PC-3 (cell line): ENCODE measurements at regions of chr15 and their contacts with region 1.

Region 1: DNA sequence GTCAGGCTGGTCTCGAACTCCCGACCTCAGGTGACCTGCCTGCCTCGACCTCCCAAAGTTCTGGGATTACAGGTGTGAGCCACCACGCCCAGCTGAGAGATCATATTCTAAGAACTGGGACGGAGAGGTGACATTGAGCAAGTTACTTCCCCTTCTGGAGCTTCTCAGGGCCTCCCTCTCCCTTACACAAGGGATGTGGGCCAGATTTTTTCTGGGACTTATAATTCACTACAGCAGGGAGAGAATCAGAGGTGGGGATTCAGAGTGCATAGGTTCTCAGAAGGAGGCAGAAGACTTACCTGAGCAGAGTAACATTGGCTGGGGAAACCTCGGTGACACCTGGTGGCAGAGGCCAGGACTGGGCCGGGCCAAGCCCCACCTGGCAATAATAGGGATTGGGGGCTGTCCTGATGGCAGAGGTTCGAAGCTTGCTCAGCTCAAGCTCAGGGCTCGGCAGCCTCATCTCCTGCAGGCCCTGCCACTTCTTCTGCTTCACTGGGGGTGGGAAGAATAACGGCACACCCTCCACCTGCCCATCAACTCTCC is 6.8 kb downstream of the LTK start:
- DNase-seq: peak; percentile 30
- ATAC-seq: peak; percentile 49
- H3K4me3 ChIP-seq: no peak overlapping the region
- H3K27ac ChIP-seq: no peak overlapping the region
- H3K4me1 ChIP-seq: peaks cover 13% of the 10 kb centered on the region
- H3K27me3 ChIP-seq: no peaks in the 10 kb centered on the region
- CTCF ChIP-seq: peak; percentile 52; the same call in 1 of the 2 replicates

Region 2: GRCh38 chr15:41401904-41402267 is 105.0 kb before region 1 on chr15:
- CTCF ChIA-PET with region 1: no interaction called
- POLR2A ChIA-PET with region 1: interaction called, 19 read pairs
- intact Hi-C with region 1: no loop called
- DNase-seq: no peak
- ATAC-seq: no peak
- H3K4me3 ChIP-seq: peak overlapping the region; percentile 84
- H3K27ac ChIP-seq: peak overlapping the region; percentile 27
- H3K4me1 ChIP-seq: 0 out of 2 replicates have a peak, but pooled peaks cover 4% of the 10 kb centered on the region
- H3K27me3 ChIP-seq: no peaks in the 10 kb centered on the region
- CTCF ChIP-seq: no peak

Region 3: DNA sequence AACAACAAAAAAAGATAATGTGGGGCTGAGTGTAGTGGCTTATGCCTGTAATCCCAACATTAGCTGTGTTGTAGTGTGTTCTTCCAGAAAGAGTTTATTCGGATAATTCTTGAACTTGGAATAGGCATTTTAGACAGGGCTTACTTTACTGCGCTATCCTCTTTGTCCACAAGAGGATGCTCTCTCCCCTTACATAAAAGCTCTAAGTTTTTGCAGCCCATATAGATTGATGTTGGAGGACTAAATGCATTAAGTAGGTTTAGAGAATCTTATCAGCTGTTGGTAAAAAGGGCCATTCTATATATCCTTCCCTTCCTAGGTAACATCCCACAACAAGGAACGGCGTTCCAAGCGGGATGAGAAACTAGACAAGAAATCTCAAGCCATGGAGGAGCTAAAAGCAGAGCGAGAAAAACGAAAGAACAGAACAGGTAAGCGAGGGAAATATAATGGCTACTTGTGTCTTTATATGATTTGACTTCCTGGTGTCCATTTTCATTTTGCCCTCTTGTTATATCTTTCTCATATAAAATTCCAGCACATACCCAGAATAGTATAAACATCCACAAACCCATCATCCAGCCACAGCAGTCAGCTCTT is 40.9 kb before region 1 on chr15:
- CTCF ChIA-PET with region 1: interaction called, 3 read pairs
- POLR2A ChIA-PET with region 1: no interaction called
- intact Hi-C with region 1: loop called (anchors 5 kb)
- DNase-seq: peak; percentile 73
- ATAC-seq: peak; percentile 80
- H3K4me3 ChIP-seq: no peak overlapping the region
- H3K27ac ChIP-seq: no peak overlapping the region
- H3K4me1 ChIP-seq: no peaks in the 10 kb centered on the region
- H3K27me3 ChIP-seq: no peaks in the 10 kb centered on the region
- CTCF ChIP-seq: peak; percentile 97

Region 4: GRCh38 chr15:41544650-41545015 is 37.8 kb after region 1 on chr15:
- CTCF ChIA-PET with region 1: no interaction called
- POLR2A ChIA-PET with region 1: interaction called, 12 read pairs
- intact Hi-C with region 1: no loop called
- DNase-seq: no peak
- ATAC-seq: no peak
- H3K4me3 ChIP-seq: peak overlapping the region; percentile 92
- H3K27ac ChIP-seq: no peak overlapping the region
- H3K4me1 ChIP-seq: peaks cover 23% of the 10 kb centered on the region
- H3K27me3 ChIP-seq: no peaks in the 10 kb centered on the region
- CTCF ChIP-seq: no peak

Region 5: DNA sequence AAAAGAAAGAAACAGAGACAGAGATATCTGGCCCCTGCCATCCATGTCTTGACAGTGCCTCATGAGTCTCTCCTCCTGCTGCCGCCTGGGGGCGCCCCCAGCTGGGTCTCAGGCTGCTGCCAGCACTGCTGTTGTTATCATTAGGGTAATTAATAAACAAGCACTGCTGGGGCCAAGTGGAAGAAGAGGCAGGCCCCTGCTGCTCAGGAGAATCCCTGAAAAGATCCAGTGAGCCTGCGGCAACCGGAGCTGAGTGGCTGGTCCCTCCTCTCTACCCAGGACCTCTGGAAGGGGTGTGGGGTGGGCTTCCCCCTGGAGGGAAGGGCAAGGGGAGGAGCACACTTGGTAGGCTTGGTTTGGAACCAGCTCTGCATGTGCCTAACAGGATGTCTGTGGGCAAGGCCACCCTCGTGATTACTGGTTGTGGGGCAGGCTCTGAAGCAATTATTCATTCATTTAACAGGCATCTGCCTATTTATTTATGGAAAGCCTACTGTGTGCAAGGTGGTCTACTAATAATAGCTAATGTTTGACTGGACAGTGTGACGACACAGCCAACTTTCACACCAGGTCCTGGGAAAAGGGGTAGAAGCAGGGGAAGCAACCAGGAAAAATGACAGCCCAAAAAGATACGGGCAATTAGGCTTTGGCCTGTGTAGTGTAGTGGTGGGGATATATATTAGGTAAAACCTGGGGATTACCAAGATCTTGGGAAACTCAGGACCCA is 51.0 kb after region 1 on chr15:
- CTCF ChIA-PET with region 1: no interaction called
- POLR2A ChIA-PET with region 1: no interaction called
- intact Hi-C with region 1: loop called (anchors 5 kb)
- DNase-seq: peak; percentile 69
- ATAC-seq: peak; percentile 50
- H3K4me3 ChIP-seq: peak overlapping the region; percentile 76
- H3K27ac ChIP-seq: peak overlapping the region; percentile 4; the same call in 1 of the 2 replicates
- H3K4me1 ChIP-seq: peaks cover 25% of the 10 kb centered on the region
- H3K27me3 ChIP-seq: no peaks in the 10 kb centered on the region
- CTCF ChIP-seq: peak; percentile 98

Region 6: DNA sequence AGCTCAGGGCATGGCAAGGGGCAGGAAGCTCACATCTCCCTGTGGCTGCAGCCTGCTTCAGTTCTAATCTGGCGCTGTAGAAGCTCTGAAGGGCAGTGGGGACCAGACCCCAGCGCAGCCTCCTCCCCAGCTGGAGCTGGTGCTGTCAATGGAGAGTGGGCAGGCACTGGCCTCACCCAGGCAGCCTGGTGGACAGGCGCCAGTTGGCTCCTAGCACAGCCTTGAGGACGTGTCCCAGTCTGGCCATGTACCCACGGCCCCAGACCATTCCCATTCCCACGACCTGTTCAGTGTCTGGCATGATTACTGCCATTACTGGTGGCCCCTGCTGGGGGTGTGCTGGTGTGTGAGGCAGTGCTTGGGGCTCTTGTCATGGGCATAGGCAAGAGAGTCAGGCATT is 68.4 kb after region 1 on chr15:
- CTCF ChIA-PET with region 1: no interaction called
- POLR2A ChIA-PET with region 1: interaction called, 19 read pairs
- intact Hi-C with region 1: no loop called
- DNase-seq: no peak
- ATAC-seq: no peak
- H3K4me3 ChIP-seq: no peak overlapping the region
- H3K27ac ChIP-seq: no peak overlapping the region
- H3K4me1 ChIP-seq: no peaks in the 10 kb centered on the region
- H3K27me3 ChIP-seq: no peaks in the 10 kb centered on the region
- CTCF ChIP-seq: no peak

Region 7: GRCh38 chr15:41936649-41937567 is 430.0 kb after region 1 on chr15:
- CTCF ChIA-PET with region 1: no interaction called
- POLR2A ChIA-PET with region 1: no interaction called
- intact Hi-C with region 1: no loop called
- DNase-seq: no peak
- ATAC-seq: no peak
- H3K4me3 ChIP-seq: no peak overlapping the region
- H3K27ac ChIP-seq: no peak overlapping the region
- H3K4me1 ChIP-seq: peaks cover 69% of the 10 kb centered on the region
- H3K27me3 ChIP-seq: no peaks in the 10 kb centered on the region
- CTCF ChIP-seq: no peak